Astrocyte of the cerebellum (primary cell): ENCODE measurements at regions of chr12 and their contacts with region 1.

Region 1: DNA sequence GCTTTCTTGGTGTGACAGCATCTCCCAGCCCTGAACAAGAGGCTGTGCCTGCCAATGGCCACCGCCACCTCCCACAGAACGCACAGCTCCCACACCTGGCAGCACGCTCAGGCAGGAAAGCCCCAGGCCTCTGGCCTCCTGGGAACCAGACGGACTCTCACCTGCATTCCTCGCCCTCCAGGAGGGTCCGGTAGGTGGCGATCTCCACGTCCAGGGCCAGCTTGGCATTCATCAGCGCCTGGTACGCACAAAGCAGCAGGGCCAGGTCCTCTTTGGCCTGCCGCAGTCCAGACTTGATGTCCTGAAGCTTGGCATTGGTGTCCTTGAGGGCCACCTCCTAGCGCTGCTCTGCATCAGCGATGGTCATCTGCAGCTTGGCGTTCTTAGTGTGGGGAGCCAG is 12.1 kb upstream of the KRT77 start:
- DNase-seq: no peak
- H3K4me3 ChIP-seq: no peak overlapping the region
- CTCF ChIP-seq: peak; percentile 4

Region 2: DNA sequence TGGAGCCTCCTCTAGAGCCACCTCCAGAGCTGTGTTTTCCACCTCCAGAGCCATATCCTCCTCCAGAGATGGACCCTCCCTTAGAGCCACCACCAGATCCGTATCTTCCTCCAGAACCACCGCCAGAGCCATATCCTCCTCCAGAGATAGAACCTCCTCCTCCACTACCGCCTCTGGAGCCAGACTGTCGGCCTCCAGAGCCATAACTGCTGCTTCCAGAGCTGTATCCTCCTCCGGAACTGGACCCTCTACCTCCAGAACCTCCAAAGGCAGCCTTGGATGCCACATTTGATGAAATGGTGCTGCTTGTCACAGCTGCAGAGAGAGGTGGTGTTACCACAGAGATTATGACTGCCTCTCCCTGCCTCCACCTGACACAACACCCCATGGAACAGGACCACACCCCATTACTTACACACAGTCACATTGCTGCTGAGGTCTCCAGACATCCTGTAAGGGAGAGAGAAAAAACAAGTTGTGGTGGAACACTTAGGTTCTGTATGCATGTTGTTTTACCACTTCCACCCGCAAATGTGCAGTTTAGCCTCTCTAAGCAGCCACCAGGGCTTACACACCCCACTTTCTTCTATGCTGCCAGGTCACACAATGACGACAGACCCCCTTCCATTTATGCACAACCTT is 70.2 kb before region 1 on chr12:
- in situ Hi-C with region 1: loop called (anchors 5 kb)
- DNase-seq: no peak
- H3K4me3 ChIP-seq: no peak overlapping the region
- CTCF ChIP-seq: no peak

Region 3: DNA sequence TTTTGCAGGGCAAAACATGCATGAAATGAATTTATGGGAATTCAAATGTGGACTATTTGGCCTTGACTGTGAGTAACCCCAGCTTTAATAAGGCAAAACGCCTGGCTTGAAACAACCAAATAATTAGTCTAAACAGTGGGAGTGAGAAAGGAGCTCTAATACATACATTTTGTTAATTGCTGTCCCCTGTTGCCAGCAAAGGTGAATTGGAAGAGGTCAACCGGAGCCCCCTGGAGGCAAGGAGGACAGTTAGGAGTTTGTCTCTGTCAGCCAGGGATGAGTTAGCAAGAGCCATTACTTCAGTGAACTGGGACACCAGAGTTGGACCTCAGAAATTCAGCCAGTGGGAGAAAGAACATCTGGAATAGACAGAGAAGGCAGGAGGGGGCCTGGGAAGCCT is 44.3 kb after region 1 on chr12:
- in situ Hi-C with region 1: loop called (anchors 5 kb)
- DNase-seq: no peak
- H3K4me3 ChIP-seq: no peak overlapping the region
- CTCF ChIP-seq: no peak

Region 4: GRCh38 chr12:53365245-53365904 is 650.0 kb after region 1 on chr12:
- in situ Hi-C with region 1: no loop called
- DNase-seq: no peak
- H3K4me3 ChIP-seq: no peak overlapping the region
- CTCF ChIP-seq: no peak